CD8-positive, alpha-beta memory T cell (primary cell): ENCODE measurements at regions of chr11 and their contacts with region 1.

Region 1: DNA sequence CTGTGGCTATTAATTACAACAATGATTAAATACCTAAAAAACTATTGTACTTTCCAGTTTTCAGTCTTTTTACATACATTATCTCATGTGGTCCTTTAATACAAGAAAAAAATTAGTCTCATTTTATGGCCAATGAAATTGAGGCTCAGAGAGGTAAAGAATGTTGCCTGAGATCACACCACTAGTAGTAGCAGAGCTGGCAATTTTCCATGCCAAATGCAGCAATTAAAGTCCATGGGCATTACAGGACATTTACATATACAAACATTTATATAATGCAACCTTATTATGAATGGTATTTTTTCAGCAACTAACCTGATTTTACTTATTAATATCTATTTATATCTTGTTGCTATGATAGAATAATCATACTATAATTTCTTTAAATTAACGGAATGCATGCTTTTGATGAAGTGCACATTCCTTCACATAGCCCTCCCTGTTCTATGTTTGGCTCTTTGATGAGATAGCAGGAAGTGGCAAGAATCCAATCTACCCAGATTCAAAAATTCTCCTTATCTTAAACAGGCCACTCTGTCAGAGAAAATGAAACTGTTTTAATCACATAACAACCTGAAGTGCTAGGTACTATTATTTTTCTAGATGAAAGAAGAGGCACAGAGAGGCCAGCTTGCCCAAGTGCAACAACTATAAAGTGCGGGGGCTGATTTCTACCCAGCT is 120.9 kb upstream of the LDLRAD3 start:
- DNase-seq: no peak
- H3K4me3 ChIP-seq: no peak overlapping the region
- H3K4me3 Mint-ChIP-seq: no peak overlapping the region
- H3K27ac ChIP-seq: no peak overlapping the region
- H3K27ac Mint-ChIP-seq: peak overlapping the region in 1 of 8 donors; percentile 45
- H3K4me1 ChIP-seq: peaks cover 6% of the 10 kb centered on the region
- H3K4me1 Mint-ChIP-seq: peaks cover 9 to 15% (median 14%) of the 10 kb centered on the region in 3 donors
- H3K27me3 ChIP-seq: no peaks in the 10 kb centered on the region
- H3K27me3 Mint-ChIP-seq: peaks cover 4 to 10% of the 10 kb centered on the region in 2 donors

Region 2: GRCh38 chr11:35785287-35786167 is 37.4 kb before region 1 on chr11:
- CTCF ChIA-PET with region 1: no interaction called
- POLR2A ChIA-PET with region 1: no interaction called
- DNase-seq: no peak
- H3K4me3 ChIP-seq: no peak overlapping the region
- H3K4me3 Mint-ChIP-seq: no peak overlapping the region
- H3K27ac ChIP-seq: no peak overlapping the region
- H3K27ac Mint-ChIP-seq: peak overlapping the region in 1 of 8 donors; percentile 10
- H3K4me1 ChIP-seq: peaks cover 18% of the 10 kb centered on the region
- H3K4me1 Mint-ChIP-seq: peaks cover 30 to 78% (median 60%) of the 10 kb centered on the region in 3 donors
- H3K27me3 ChIP-seq: no peaks in the 10 kb centered on the region
- H3K27me3 Mint-ChIP-seq: no peaks in the 10 kb centered on the region

Region 3: DNA sequence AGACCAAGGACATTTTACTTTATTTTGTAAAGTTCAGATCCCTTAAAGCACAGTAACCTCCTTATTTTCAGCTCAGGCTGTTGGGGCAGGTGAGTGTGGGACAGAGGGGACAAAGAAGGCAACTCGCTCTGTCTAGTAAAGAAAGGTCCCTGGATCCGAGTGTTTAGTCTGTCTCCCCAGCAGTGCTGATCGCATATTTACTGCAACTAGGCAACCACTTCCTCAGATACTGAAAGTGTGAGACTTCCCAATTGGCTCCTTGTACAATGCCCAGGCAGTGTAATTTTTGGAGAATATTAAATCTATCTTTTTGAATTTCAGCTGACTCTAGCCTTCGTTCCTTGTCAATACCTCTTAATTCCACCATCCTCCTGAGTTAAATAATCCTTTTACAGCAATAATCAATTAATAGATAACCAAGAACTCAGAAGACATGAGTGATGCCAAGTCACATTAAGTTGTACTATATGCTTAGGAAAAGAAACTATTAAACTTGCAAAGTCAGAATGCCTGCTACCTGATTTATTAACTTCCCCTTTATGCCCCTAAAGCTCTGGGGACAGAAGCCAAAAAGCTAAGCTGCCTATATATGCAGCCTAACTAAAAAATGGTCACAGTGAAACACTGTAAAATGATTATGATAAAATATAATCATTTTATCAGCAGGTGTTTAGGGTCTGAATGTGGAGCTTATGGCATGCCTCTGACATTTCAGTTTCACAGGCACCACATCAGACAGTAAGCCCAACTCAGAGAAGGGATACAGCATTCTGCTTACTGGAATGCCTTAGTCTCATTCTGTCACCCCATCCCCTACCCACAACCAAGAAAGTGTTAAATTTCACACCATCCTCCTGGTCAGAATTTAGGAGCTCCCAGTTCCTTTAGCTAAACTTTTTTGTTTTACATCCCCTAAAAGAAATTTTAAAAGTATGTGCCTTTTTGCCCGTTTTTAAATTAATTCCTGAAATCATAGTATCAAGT is 21.7 kb before region 1 on chr11:
- CTCF ChIA-PET with region 1: interaction called, 15 read pairs
- POLR2A ChIA-PET with region 1: interaction called, 5 read pairs
- DNase-seq: no peak
- H3K4me3 ChIP-seq: no peak overlapping the region
- H3K4me3 Mint-ChIP-seq: no peak overlapping the region
- H3K27ac ChIP-seq: no peak overlapping the region
- H3K27ac Mint-ChIP-seq: no peak overlapping the region
- H3K4me1 ChIP-seq: no peaks in the 10 kb centered on the region
- H3K4me1 Mint-ChIP-seq: peaks cover 11 to 27% (median 15%) of the 10 kb centered on the region in 3 donors
- H3K27me3 ChIP-seq: no peaks in the 10 kb centered on the region
- H3K27me3 Mint-ChIP-seq: peaks cover 0 to 1% of the 10 kb centered on the region in 2 donors

Region 4: DNA sequence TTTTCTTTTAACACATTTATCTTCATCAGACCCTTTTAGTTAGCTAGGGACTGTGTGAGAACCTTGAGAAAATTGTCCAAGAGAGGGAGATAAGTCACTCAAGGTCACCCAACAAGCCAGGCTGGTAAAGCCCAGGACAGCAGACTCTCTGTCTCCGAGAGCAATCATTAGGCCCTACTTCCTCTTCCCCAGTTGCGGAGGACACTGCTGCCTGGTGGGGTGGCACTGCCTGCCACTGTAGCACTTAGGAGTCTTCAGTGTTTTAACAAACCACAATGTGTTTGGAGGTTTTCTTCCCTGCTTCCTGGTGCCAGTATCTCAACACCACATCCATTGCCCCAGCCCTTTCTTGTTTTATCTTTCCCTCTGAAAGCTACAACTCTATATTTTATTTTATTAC is 11.2 kb before region 1 on chr11:
- CTCF ChIA-PET with region 1: interaction called, 14 read pairs
- POLR2A ChIA-PET with region 1: no interaction called
- DNase-seq: no peak
- H3K4me3 ChIP-seq: no peak overlapping the region
- H3K4me3 Mint-ChIP-seq: no peak overlapping the region
- H3K27ac ChIP-seq: no peak overlapping the region
- H3K27ac Mint-ChIP-seq: no peak overlapping the region
- H3K4me1 ChIP-seq: no peaks in the 10 kb centered on the region
- H3K4me1 Mint-ChIP-seq: no peaks in the 10 kb centered on the region
- H3K27me3 ChIP-seq: no peaks in the 10 kb centered on the region
- H3K27me3 Mint-ChIP-seq: no peaks in the 10 kb centered on the region

Region 5: GRCh38 chr11:35838071-35838470 is 15.1 kb after region 1 on chr11:
- CTCF ChIA-PET with region 1: interaction called, 12 read pairs
- POLR2A ChIA-PET with region 1: no interaction called
- DNase-seq: no peak
- H3K4me3 ChIP-seq: no peak overlapping the region
- H3K4me3 Mint-ChIP-seq: no peak overlapping the region
- H3K27ac ChIP-seq: no peak overlapping the region
- H3K27ac Mint-ChIP-seq: no peak overlapping the region
- H3K4me1 ChIP-seq: no peaks in the 10 kb centered on the region
- H3K4me1 Mint-ChIP-seq: no peaks in the 10 kb centered on the region
- H3K27me3 ChIP-seq: peaks cover 4% of the 10 kb centered on the region
- H3K27me3 Mint-ChIP-seq: peaks cover 17 to 38% of the 10 kb centered on the region in 2 donors